Heart left ventricle (tissue), 16 donors: ENCODE measurements at regions of chr13 and their contacts with region 1.

Region 1: DNA sequence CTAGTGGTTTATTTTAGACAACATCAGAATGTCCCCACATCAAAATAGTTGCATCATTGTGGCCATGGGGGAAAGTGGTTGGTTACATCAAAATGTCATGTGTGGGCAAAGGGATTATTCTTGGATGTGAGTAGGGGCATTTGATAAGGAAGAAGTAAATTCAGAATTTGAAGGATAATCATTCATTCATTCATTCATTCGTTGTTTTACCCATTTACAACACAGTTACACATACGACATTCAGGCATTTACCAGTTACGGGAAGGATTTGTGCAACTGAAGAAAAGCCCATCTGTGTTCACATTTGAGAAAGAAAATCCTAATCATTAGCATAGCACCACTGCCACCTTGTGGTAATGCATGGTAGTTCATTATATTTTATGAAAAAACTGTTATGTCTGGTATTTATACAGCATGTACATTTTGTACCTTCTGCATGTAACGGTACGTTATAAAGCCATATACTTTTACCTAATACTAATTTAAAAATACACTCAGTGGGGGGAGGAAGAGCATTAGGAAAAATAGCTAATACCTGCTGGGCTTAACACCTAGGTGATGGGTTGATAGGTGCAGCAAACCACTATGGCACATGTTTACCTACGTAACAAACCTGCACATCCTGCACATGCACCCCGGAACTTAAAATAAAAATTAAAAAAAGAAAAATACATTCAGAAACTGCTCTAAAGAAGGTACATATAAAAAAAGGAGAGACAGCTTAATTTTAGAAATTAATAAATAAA is 62.1 kb downstream of the DGKH start:
- DNase-seq: no peak
- ATAC-seq: peak in 3 of 4 donors; percentile 53 to 59 (median 58)
- H3K4me3 ChIP-seq: no peak overlapping the region
- H3K27ac ChIP-seq: no peak overlapping the region
- H3K4me1 ChIP-seq: peaks cover 0 to 42% (median 18%) of the 10 kb centered on the region in 12 donors
- H3K27me3 ChIP-seq: no peaks in the 10 kb centered on the region
- CTCF ChIP-seq: peak; percentile 76 to 94 (median 86)
- POLR2A ChIP-seq: no peak

Region 2: GRCh38 chr13:41352935-41353840 is 757.4 kb before region 1 on chr13:
- intact Hi-C with region 1: loop called in 2 of 10 experiments (anchors 5 to 10 kb)
- DNase-seq: peak in 1 of 5 donors; percentile 40
- ATAC-seq: peak in 3 of 4 donors; percentile 38 to 58 (median 46)
- H3K4me3 ChIP-seq: no peak overlapping the region
- H3K27ac ChIP-seq: peak overlapping the region in 1 of 12 donors; percentile 44
- H3K4me1 ChIP-seq: peaks cover 0 to 26% (median 0%) of the 10 kb centered on the region in 12 donors
- H3K27me3 ChIP-seq: no peaks in the 10 kb centered on the region
- CTCF ChIP-seq: peak; percentile 72 to 89 (median 83)
- POLR2A ChIP-seq: no peak

Region 3: GRCh38 chr13:41384755-41385503 is 725.7 kb before region 1 on chr13:
- intact Hi-C with region 1: loop called in 1 of 10 experiments (anchors 10 kb)
- DNase-seq: no peak
- ATAC-seq: no peak
- H3K4me3 ChIP-seq: no peak overlapping the region
- H3K27ac ChIP-seq: no peak overlapping the region
- H3K4me1 ChIP-seq: peaks cover 0 to 20% (median 12%) of the 10 kb centered on the region in 12 donors
- H3K27me3 ChIP-seq: no peaks in the 10 kb centered on the region
- CTCF ChIP-seq: peak; percentile 20 to 49 (median 34)
- POLR2A ChIP-seq: no peak

Region 4: DNA sequence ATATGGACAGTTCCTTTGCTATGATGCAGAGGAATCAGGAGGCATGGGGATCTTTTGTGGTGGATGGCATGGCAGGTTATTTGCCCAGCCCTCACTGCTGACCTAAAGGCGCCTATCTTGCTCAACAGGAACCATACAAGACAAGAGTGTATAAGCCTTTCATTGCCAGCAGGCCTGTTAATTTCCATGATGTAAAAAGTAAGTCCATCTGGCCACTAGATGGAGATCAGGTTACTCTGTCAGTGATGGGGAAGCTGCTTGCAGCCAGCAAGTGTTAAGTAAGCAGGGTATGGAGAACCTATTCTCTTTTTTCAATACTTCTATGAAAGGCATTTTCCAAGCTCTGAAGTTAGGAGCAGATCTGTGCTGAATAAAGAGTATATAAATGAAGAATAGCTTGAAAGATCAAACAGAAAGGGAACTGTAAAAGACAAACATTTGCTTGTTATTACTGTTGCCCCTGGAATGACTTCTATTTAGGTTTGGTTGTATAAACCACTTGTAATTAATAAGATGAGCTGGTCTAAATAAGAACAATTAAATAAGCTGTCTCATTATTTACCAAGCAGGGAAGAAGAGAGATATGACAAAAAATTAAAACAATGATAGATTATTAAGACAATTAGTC is 442.3 kb before region 1 on chr13:
- intact Hi-C with region 1: loop called (anchors 1 to 5 kb)
- DNase-seq: peak in 4 of 5 donors; percentile 44 to 66 (median 56)
- ATAC-seq: peak; percentile 57 to 98 (median 96)
- H3K4me3 ChIP-seq: no peak overlapping the region
- H3K27ac ChIP-seq: no peak overlapping the region
- H3K4me1 ChIP-seq: peaks cover 0 to 7% (median 1%) of the 10 kb centered on the region in 12 donors
- H3K27me3 ChIP-seq: no peaks in the 10 kb centered on the region
- CTCF ChIP-seq: peak; percentile 64 to 85 (median 79)
- POLR2A ChIP-seq: no peak

Region 5: DNA sequence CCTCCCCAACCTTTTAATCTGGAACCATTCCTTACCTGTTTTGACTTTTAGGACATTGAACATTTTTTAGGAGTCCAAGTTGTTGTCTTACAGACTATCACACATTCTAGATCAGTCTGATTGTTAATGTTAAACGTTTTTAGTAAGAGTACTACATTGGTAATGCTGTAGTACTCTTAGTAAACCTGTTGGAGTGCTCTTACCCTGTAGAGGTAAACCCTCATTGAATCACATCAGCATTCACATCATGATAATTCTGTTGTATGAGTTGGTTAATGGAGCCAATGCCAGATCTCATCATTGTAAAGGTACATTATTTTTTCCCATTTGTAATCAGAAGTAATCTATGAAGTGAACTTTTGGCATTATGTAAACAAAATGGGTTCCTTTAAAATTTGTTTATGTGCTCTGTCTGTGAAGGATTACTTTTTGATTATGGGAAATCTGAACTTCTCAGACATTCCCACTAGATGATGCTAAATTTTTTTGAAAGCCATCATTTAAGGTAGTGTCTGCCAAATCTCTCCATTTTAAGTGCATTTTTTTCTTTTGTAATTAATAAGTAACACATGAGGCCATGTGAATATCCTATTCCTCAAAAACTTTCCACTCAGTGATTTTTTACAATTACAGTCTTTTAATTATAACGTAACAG is 204.9 kb before region 1 on chr13:
- intact Hi-C with region 1: loop called in 7 of 10 experiments (anchors 5 to 10 kb)
- DNase-seq: no peak
- ATAC-seq: peak in 3 of 4 donors; percentile 42 to 65 (median 55)
- H3K4me3 ChIP-seq: no peak overlapping the region
- H3K27ac ChIP-seq: no peak overlapping the region
- H3K4me1 ChIP-seq: no peaks in the 10 kb centered on the region
- H3K27me3 ChIP-seq: no peaks in the 10 kb centered on the region
- CTCF ChIP-seq: peak; percentile 35 to 66 (median 48)
- POLR2A ChIP-seq: no peak

Region 6: DNA sequence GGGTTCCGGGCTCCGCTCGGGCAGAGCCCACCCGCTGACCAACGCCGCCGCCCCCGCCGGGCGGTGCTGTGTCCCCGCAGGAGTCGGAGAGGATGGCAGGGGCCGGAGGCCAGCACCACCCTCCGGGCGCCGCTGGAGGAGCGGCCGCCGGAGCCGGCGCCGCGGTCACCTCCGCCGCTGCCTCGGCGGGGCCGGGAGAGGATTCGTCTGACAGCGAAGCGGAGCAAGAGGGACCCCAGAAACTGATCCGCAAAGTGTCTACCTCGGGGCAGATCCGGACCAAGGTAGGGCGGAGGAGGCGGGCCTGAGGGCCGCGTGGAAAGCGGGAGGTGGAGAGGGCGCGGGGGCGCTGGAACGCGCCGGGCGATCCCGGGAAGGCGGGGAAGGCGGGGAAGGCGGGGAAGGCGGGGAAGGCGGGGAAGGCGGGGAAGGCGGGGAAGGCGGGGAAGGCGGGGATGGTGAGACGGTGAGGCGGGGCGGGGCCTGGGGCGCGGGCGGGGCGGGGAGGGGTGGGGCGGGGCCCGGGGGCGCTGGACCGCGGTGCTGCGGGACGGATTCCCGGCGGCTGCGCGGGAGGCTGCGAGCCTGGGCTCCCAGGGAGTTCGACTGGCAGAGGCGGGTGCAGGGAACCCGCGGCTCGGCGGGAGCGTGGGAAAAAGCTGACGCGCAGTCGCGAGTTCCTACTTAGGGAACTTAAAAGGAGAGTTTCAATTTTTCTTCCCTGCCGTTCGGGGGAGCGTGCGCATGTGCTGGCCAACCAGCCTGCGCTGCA is 61.7 kb before region 1 on chr13:
- intact Hi-C with region 1: loop called in 9 of 10 experiments (anchors 5 to 10 kb)
- DNase-seq: peak; percentile 88 to 91 (median 89)
- ATAC-seq: peak; percentile 80 to 91 (median 88)
- H3K4me3 ChIP-seq: peak overlapping the region; percentile 70 to 96 (median 89)
- H3K27ac ChIP-seq: peak overlapping the region; percentile 89 to 96 (median 90)
- H3K4me1 ChIP-seq: peaks cover 0 to 28% (median 17%) of the 10 kb centered on the region in 12 donors
- H3K27me3 ChIP-seq: no peaks in the 10 kb centered on the region
- CTCF ChIP-seq: peak in 7 of 12 donors; percentile 9 to 53 (median 26)
- POLR2A ChIP-seq: peak in 1 of 2 donors; percentile 39

Region 7: DNA sequence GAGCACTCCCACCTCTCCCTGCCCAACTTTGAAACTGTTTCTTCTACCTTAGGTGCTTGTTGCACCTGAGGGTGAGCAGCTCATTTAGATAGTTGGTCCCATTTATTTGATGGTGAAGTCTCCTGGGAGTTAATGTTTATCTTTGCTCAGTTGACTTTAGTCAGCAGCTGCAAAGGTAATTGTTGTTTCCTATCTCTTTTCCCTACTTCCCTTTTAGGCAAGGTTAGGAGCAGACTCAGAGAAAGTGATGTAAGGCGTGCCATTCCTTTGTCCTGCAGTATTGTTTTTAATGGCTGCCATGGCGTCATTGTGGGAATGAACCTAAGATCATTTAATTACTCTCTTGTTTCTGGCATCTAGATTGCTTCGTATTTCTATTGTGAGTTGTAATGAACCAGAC is 173.0 kb after region 1 on chr13:
- intact Hi-C with region 1: no loop called
- DNase-seq: no peak
- ATAC-seq: peak in 1 of 4 donors; percentile 72
- H3K4me3 ChIP-seq: no peak overlapping the region
- H3K27ac ChIP-seq: peak overlapping the region in 1 of 12 donors; percentile 8
- H3K4me1 ChIP-seq: peaks cover 0 to 27% (median 9%) of the 10 kb centered on the region in 12 donors
- H3K27me3 ChIP-seq: no peaks in the 10 kb centered on the region
- CTCF ChIP-seq: no peak
- POLR2A ChIP-seq: no peak